ENCODE measurements at regions of chr5 and their contacts with region 1.

Region 1: DNA sequence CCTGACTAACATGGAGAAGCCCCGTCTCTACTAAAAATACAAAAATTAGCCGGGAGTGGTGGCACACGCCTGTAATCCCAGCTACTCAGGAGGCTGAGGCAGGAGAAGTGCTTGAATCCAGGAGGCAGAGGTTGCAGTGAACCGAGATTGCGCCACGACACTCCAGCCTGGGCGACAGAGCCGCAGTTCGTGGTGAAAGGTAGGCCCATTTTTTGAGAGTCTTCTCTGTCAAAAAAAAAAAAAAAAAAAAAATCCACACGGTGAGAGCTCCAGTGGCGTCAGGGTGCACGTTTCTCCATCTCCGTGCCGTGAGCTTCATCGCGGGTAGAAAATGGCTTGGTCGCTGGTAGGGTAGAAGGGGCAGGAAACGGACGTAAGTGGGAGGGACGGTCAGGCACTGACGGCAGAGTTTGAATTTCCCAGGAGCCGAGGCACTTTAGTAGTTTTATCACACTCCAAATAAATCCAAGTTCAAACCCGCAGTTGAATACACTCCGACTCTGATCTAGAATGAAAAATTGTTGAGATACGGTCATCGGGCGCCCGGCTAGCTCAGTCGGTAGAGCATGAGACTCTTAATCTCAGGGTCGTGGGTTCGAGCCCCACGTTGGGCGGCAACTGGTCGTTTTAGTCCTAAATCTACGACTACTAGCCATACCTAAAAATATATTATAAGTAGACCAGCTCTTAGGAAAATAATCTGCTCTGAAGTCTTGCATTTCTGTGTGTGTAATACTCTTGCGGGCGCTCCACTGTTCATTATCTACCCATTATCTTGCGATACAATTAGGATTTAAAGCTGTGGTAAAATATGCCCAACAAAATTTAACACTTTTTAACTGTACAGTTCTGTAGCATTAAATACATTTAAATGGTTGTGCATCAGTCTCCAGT is 2.5 kb upstream of the TRIM7 start:
- H3K4me3 Mint-ChIP-seq: peak overlapping the region; percentile 89
- H3K27ac Mint-ChIP-seq: peak overlapping the region; percentile 70
- H3K4me1 Mint-ChIP-seq: peaks cover 48% of the 10 kb centered on the region
- H3K27me3 Mint-ChIP-seq: peaks cover 20% of the 10 kb centered on the region

Region 2: GRCh38 chr5:179680780-179681401 is 1526.6 kb before region 1 on chr5 and contains the start of gene CBY3:
- intact Hi-C with region 1: no loop called
- H3K4me3 Mint-ChIP-seq: no peak within 1 kb of the TSS
- H3K27ac Mint-ChIP-seq: peak within 1 kb of the TSS; percentile 76
- H3K4me1 Mint-ChIP-seq: peaks cover 53% of the 10 kb centered on the region
- H3K27me3 Mint-ChIP-seq: no peaks in the 10 kb centered on the region

Region 3: GRCh38 chr5:180071531-180072255 is 1135.8 kb before region 1 on chr5 and contains the start of gene RNF130:
- intact Hi-C with region 1: no loop called
- H3K4me3 Mint-ChIP-seq: peak within 1 kb of the TSS; percentile 92
- H3K27ac Mint-ChIP-seq: peak within 1 kb of the TSS; percentile 96
- H3K4me1 Mint-ChIP-seq: peaks cover 36% of the 10 kb centered on the region
- H3K27me3 Mint-ChIP-seq: peaks cover 3% of the 10 kb centered on the region

Region 4: DNA sequence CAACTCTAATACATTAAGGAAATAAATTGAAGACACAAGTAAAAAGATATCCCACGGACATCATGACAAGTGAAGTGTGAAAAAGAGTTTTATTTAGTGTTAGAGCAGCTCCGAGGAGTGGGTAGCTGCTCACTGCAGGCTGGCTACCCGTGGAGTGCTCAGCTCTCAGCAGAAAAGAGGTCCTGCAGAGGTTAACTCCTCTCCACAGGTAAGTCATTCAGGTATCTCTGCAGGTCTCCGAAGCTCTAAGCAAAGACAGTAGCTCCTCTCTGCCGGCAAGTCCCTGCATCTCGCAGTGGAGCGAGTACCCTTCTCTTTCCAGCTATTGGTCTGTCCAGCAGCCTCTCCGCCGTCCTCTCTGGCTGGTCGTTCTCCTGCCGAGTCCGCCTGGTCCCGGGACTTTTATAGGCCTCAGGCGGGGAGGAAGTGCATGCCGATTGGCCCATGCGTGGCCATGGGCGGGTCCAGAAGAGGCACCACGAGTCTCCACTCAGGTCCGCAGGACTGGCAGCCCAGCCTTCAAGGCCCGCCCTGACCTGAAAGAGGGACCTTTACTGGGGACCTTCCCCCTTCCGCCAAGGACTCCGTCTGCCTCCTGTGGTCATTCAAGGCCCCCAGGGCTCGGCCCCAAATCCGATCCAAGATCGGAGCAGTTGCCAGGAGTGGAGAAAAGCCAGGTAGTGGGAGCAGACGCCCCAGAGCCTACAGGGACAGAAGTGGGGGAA is 137.5 kb before region 1 on chr5:
- intact Hi-C with region 1: no loop called
- H3K4me3 Mint-ChIP-seq: no peak overlapping the region
- H3K27ac Mint-ChIP-seq: no peak overlapping the region
- H3K4me1 Mint-ChIP-seq: no peaks in the 10 kb centered on the region
- H3K27me3 Mint-ChIP-seq: peaks cover 61% of the 10 kb centered on the region

Region 5: GRCh38 chr5:181173420-181174342 is 33.8 kb before region 1 on chr5:
- intact Hi-C with region 1: loop called (anchors 5 kb)
- H3K4me3 Mint-ChIP-seq: peak overlapping the region; percentile 65
- H3K27ac Mint-ChIP-seq: peak overlapping the region; percentile 3
- H3K4me1 Mint-ChIP-seq: peaks cover 31% of the 10 kb centered on the region
- H3K27me3 Mint-ChIP-seq: peaks cover 82% of the 10 kb centered on the region

Region 6: GRCh38 chr5:181191529-181192394 is 15.7 kb before region 1 on chr5:
- intact Hi-C with region 1: loop called (anchors 1 kb)
- H3K4me3 Mint-ChIP-seq: peak overlapping the region; percentile 99
- H3K27ac Mint-ChIP-seq: peak overlapping the region; percentile 99
- H3K4me1 Mint-ChIP-seq: peaks cover 58% of the 10 kb centered on the region
- H3K27me3 Mint-ChIP-seq: peaks cover 21% of the 10 kb centered on the region

Region 7: GRCh38 chr5:181223058-181223728 is 15.7 kb after region 1 on chr5 and contains the start of gene TRIM41:
- intact Hi-C with region 1: loop called (anchors 2 kb)
- H3K4me3 Mint-ChIP-seq: peak within 1 kb of the TSS; percentile 82
- H3K27ac Mint-ChIP-seq: peak within 1 kb of the TSS; percentile 93
- H3K4me1 Mint-ChIP-seq: peaks cover 47% of the 10 kb centered on the region
- H3K27me3 Mint-ChIP-seq: peaks cover 3% of the 10 kb centered on the region